ENCODE measurements at regions of chr4 and their contacts with region 1.

Region 1: GRCh38 chr4:38179690-38180377 is 219.6 kb downstream of the PTTG2 start:
- DNase-seq: peak; percentile 82
- ATAC-seq: peak; percentile 65
- H3K4me3 Mint-ChIP-seq: no peak overlapping the region
- H3K27ac Mint-ChIP-seq: no peak overlapping the region
- H3K4me1 Mint-ChIP-seq: peaks cover 33% of the 10 kb centered on the region
- H3K27me3 Mint-ChIP-seq: no peaks in the 10 kb centered on the region
- CTCF ChIP-seq: peak; percentile 96

Region 2: DNA sequence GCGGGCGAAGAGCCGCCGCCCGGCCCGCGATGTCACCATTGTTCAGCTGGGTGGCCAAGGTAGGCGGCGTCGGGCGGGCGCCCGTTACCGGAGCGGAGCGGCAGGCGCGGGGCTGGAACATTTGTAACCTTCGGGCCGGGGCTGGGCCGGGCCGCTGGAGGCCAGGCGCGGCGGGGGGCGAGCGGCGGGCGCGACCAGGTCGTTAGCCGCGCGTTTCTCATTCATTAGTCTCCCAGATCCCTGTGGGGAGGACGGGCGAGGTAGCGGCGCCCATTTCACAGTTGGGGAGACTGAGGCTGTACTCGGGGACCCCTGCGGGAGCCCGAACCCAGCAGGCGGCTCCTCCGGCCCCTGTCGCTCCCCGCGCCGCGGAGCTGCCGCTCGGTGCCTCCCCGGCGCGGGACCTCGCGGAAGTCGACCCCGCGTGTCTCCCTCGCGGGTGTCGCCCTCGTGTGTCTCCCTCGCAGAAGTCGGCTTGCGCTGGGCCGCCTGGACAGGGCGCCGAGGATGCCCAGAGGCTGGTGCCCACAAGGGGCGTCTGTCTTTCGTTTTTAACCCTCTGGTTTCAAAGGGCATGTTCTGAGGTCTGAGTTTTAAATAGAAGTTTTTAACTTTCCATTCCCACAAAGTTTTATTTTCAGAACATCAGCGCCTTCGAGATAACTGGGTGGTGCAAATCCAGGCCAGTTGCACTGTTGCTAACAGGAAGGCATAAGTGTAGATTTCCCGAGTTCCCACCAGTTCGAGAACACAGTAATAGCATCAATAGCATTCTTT is 202.2 kb before region 1 on chr4:
- CTCF ChIA-PET with region 1: no interaction called
- POLR2A ChIA-PET with region 1: no interaction called
- intact Hi-C with region 1: no loop called
- DNase-seq: peak; percentile 78
- ATAC-seq: peak; percentile 71
- H3K4me3 Mint-ChIP-seq: peak overlapping the region; percentile 81
- H3K27ac Mint-ChIP-seq: peak overlapping the region; percentile 80
- H3K4me1 Mint-ChIP-seq: peaks cover 37% of the 10 kb centered on the region
- H3K27me3 Mint-ChIP-seq: no peaks in the 10 kb centered on the region
- CTCF ChIP-seq: peak; percentile 65

Region 3: DNA sequence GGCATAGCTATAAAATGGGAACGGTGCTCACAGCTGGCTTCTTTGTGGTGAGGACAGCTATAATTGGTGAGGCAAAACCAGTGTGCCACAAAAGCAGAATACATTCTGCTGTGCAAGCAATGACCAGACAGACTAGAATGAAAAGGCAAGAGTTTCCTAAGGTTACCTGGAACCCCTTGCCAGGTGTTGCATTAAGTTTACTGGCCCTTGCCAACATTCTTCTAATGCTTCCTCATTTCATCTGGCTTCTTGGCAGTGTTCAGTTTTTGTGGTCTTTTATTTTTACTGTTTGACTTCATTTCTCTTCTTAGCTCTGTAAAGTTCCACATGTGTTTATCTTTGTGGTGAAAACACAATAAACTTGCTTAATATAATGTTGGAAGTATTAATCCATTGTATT is 88.2 kb before region 1 on chr4:
- CTCF ChIA-PET with region 1: interaction called, 15 read pairs
- POLR2A ChIA-PET with region 1: interaction called, 3 read pairs
- intact Hi-C with region 1: no loop called
- DNase-seq: no peak
- ATAC-seq: no peak
- H3K4me3 Mint-ChIP-seq: no peak overlapping the region
- H3K27ac Mint-ChIP-seq: no peak overlapping the region
- H3K4me1 Mint-ChIP-seq: peaks cover 17% of the 10 kb centered on the region
- H3K27me3 Mint-ChIP-seq: no peaks in the 10 kb centered on the region
- CTCF ChIP-seq: no peak

Region 4: GRCh38 chr4:38169524-38169923 is 10.3 kb before region 1 on chr4:
- CTCF ChIA-PET with region 1: interaction called, 24 read pairs
- POLR2A ChIA-PET with region 1: interaction called, 6 read pairs
- intact Hi-C with region 1: no loop called
- DNase-seq: no peak
- ATAC-seq: no peak
- H3K4me3 Mint-ChIP-seq: no peak overlapping the region
- H3K27ac Mint-ChIP-seq: no peak overlapping the region
- H3K4me1 Mint-ChIP-seq: peaks cover 28% of the 10 kb centered on the region
- H3K27me3 Mint-ChIP-seq: no peaks in the 10 kb centered on the region
- CTCF ChIP-seq: no peak

Region 5: GRCh38 chr4:38319456-38320342 is 139.9 kb after region 1 on chr4:
- CTCF ChIA-PET with region 1: interaction called, 31 read pairs
- POLR2A ChIA-PET with region 1: interaction called, 4 read pairs
- intact Hi-C with region 1: loop called (anchors 5 kb)
- DNase-seq: peak; percentile 96
- ATAC-seq: peak; percentile 86
- H3K4me3 Mint-ChIP-seq: peak overlapping the region; percentile 76
- H3K27ac Mint-ChIP-seq: peak overlapping the region; percentile 89
- H3K4me1 Mint-ChIP-seq: peaks cover 39% of the 10 kb centered on the region
- H3K27me3 Mint-ChIP-seq: no peaks in the 10 kb centered on the region
- CTCF ChIP-seq: peak; percentile 96

Region 6: DNA sequence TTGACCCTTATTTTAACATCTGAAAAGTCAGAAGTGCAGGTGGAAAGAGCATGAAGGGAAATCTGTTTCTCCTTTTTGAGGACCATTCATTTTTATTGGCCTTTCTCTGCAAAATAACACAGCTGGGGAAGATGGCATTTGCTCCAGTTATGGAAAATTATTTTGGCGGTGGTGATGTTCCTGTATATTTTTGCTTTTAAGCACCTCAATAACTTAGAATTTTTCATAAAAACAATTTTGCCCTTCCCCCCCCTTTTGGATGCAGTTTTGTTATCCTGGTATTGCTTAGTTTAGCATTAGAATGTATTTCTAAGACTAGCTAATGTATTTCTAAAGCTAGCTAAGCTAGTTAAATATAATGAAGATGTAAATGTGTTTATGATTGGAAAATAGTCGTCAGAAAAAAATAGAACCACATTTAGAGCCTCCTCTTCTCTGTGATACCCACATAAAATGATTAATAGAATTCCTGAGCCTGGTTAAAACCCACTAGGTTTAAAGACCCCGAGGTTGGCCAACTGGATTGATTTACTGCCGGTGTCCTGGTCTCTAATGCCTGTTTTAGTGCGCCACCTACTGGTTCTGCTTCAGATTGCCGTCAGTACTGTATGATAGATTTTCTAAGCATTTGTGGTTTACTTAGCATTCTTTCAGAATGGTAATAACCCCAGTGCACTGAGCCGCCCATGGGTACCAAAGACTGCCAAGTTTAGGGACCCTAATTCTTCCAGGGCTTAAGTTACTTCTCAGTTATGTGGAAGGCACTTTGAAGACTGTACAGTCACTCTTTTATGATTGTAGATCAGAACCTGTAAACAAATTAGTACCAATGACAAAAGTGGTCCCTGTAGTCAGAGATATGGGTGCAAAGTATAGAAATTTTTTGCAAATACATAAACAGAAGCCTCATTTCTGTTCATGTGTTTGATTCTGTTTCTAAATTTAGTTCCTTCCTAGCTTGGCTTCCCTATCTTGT is 495.6 kb after region 1 on chr4:
- CTCF ChIA-PET with region 1: interaction called, 119 read pairs
- POLR2A ChIA-PET with region 1: no interaction called
- intact Hi-C with region 1: loop called (anchors 2 kb)
- DNase-seq: peak; percentile 95
- ATAC-seq: peak; percentile 65
- H3K4me3 Mint-ChIP-seq: peak overlapping the region; percentile 46
- H3K27ac Mint-ChIP-seq: peak overlapping the region; percentile 66
- H3K4me1 Mint-ChIP-seq: peaks cover 82% of the 10 kb centered on the region
- H3K27me3 Mint-ChIP-seq: no peaks in the 10 kb centered on the region
- CTCF ChIP-seq: peak; percentile 87

Region 7: DNA sequence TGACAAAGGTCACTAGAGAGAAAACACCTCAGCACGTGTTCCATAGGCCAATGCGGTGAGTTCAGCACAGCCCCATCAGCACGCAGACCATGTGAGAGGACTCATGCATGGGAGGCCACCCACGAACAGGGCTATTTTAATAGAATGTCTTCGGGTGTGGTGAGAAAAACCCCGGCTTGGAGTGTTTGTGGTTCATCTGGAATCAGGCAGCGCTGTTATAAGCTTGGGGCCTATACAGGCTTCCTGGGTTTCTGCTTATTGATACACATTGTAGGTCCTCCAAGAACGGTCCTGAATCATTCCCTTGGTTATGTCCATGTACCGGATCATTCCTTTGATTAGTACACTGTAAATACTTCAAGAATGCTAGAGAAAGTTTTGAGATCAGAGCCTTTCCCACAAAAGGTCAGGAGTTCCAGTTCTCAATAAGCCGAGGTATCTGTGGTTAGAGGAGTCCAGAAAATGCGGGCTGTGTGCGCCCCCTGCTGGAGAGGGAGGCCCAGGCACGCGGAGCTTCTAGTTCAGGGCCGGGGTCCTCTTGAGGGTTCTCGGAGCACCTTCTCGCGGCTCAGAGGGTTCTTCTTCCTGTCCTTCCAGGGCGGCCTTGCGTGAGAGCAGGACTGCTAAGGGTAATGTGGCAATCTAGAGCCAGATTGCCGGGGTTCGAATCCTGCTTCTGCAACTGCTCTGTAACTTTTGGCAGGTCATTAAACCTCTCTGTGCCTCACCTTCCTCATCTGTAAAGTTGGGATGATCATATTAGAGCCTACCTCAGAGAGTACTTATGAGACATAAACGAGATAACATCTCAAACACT is 551.2 kb after region 1 on chr4:
- CTCF ChIA-PET with region 1: interaction called, 136 read pairs
- POLR2A ChIA-PET with region 1: interaction called, 4 read pairs
- intact Hi-C with region 1: loop called (anchors 1 kb)
- DNase-seq: peak; percentile 91
- ATAC-seq: peak; percentile 93
- H3K4me3 Mint-ChIP-seq: no peak overlapping the region
- H3K27ac Mint-ChIP-seq: peak overlapping the region; percentile 64
- H3K4me1 Mint-ChIP-seq: peaks cover 15% of the 10 kb centered on the region
- H3K27me3 Mint-ChIP-seq: peaks cover 2% of the 10 kb centered on the region
- CTCF ChIP-seq: peak; percentile 99